HAP-1 (cell line): ENCODE measurements at regions of chr3 and their contacts with region 1.

Region 1: GRCh38 chr3:28328188-28329151 is 20.1 kb upstream of the ZCWPW2 start:
- DNase-seq: no peak
- H3K4me3 ChIP-seq: no peak overlapping the region
- H3K4me1 ChIP-seq: 0 out of 2 replicates have a peak, but pooled peaks cover 7% of the 10 kb centered on the region
- H3K27me3 ChIP-seq: no peaks in the 10 kb centered on the region

Region 2: DNA sequence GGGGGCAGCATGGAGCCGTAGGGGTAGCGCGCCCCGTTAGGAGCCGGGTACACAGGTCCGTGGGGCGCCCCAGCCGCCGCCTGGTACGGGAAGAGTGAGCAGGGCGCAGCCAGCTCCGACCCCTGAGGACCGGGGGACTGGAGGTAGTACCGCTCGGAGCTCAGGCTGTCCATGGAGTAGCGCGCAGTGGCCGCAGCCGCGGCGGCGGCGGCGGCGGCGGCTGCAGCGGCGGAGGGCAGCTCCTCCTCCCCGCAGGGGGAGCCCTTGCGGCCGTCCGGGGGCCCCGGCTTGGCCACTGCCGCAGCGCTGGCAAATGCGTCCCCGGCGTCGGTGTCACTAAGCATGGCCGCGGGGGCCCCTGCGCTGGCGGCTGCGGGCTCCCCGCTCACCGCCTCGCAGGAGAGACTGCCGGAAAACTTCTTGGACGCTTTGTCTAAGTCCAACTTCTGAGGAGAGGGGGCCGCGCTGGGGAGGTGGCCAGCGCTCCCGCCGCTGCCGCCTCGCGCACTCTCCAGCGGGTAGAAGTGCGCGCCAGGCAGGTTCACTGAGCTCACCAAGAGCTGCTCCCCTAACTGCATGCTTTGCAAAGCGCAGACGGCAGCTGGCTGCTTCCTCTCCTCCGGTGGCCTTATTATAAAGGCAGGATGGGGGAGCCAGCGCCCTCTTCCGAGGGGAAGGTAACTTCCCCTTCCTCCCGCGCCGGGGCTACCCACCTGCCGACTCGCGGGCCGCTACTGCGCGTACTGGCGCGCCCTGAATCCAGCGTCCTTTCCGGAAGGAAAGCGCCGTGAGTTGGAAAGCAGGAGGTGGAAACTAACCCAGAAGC is 606.5 kb before region 1 on chr3 and contains the start of gene EOMES:
- in situ Hi-C with region 1: loop called (anchors 10 kb)
- DNase-seq: peak; percentile 56 to 79
- H3K4me3 ChIP-seq: peak within 1 kb of the TSS; percentile 59
- H3K4me1 ChIP-seq: no peaks in the 10 kb centered on the region
- H3K27me3 ChIP-seq: peaks cover 20% of the 10 kb centered on the region